Pancreas (tissue), 10 donors: ENCODE measurements at regions of chr22 and their contacts with region 1.

Region 1: GRCh38 chr22:17830043-17830961 is 56.0 kb upstream of the BID start:
- DNase-seq: peak; percentile 76 to 94 (median 90)
- ATAC-seq: peak; percentile 92 to 99 (median 97)
- H3K4me3 ChIP-seq: no peak overlapping the region
- H3K27ac ChIP-seq: no peak overlapping the region
- H3K4me1 ChIP-seq: no peaks in the 10 kb centered on the region
- H3K27me3 ChIP-seq: no peaks in the 10 kb centered on the region
- CTCF ChIP-seq: peak; percentile 96 to 99 (median 99)

Region 2: GRCh38 chr22:18070556-18071306 is 240.4 kb after region 1 on chr22:
- intact Hi-C with region 1: loop called (anchors 5 kb)
- DNase-seq: peak in 1 of 6 donors; percentile 49
- ATAC-seq: peak in 2 of 4 donors; percentile 17 to 32
- H3K4me3 ChIP-seq: no peak overlapping the region
- H3K27ac ChIP-seq: no peak overlapping the region
- H3K4me1 ChIP-seq: no peaks in the 10 kb centered on the region
- H3K27me3 ChIP-seq: no peaks in the 10 kb centered on the region
- CTCF ChIP-seq: no peak

Region 3: GRCh38 chr22:18077639-18078328 is 247.5 kb after region 1 on chr22 and contains the start of gene PEX26:
- intact Hi-C with region 1: loop called (anchors 5 kb)
- DNase-seq: peak; percentile 91 to 96 (median 94)
- ATAC-seq: peak; percentile 96 to 97 (median 97)
- H3K4me3 ChIP-seq: peak within 1 kb of the TSS; percentile 77 to 99 (median 92)
- H3K27ac ChIP-seq: peak within 1 kb of the TSS; percentile 59 to 88 (median 67)
- H3K4me1 ChIP-seq: peaks cover 7 to 20% (median 16%) of the 10 kb centered on the region in 3 donors
- H3K27me3 ChIP-seq: no peaks in the 10 kb centered on the region
- CTCF ChIP-seq: no peak
- total RNA-seq, gene PEX26: 11.0 to 26.5 (median 14.8) TPM